B cell (primary cell): ENCODE measurements at regions of chr22 and their contacts with region 1.

Region 1: GRCh38 chr22:29359469-29359868 is 28.9 kb downstream of the AP1B1 start:
- DNase-seq: no peak
- ATAC-seq: no peak
- H3K4me3 ChIP-seq: no peak overlapping the region
- H3K4me3 Mint-ChIP-seq: no peak overlapping the region
- H3K27ac ChIP-seq: no peak overlapping the region
- H3K27ac Mint-ChIP-seq: peak overlapping the region; percentile 54
- H3K4me1 ChIP-seq: peaks cover 10 to 15% of the 10 kb centered on the region in 2 donors
- H3K4me1 Mint-ChIP-seq: peaks cover 19% of the 10 kb centered on the region
- H3K27me3 ChIP-seq: no peaks in the 10 kb centered on the region
- H3K27me3 Mint-ChIP-seq: no peaks in the 10 kb centered on the region
- CTCF ChIP-seq: no peak

Region 2: GRCh38 chr22:28497188-28497587 is 862.3 kb before region 1 on chr22:
- CTCF ChIA-PET with region 1: no interaction called
- POLR2A ChIA-PET with region 1: no interaction called
- intact Hi-C with region 1: no loop called
- DNase-seq: no peak
- ATAC-seq: no peak
- H3K4me3 ChIP-seq: no peak overlapping the region
- H3K4me3 Mint-ChIP-seq: no peak overlapping the region
- H3K27ac ChIP-seq: no peak overlapping the region
- H3K27ac Mint-ChIP-seq: no peak overlapping the region
- H3K4me1 ChIP-seq: no peaks in the 10 kb centered on the region
- H3K4me1 Mint-ChIP-seq: no peaks in the 10 kb centered on the region
- H3K27me3 ChIP-seq: no peaks in the 10 kb centered on the region
- H3K27me3 Mint-ChIP-seq: peaks cover 22% of the 10 kb centered on the region
- CTCF ChIP-seq: no peak

Region 3: GRCh38 chr22:28741758-28742561 is 617.5 kb before region 1 on chr22 and contains the starts of genes CHEK2 and HSCB:
- CTCF ChIA-PET with region 1: no interaction called
- POLR2A ChIA-PET with region 1: no interaction called
- intact Hi-C with region 1: no loop called
- DNase-seq: peak; percentile 98
- ATAC-seq: peak; percentile 91
- H3K4me3 ChIP-seq: peak within 1 kb of the TSS; percentile 74 to 99 (median 84)
- H3K4me3 Mint-ChIP-seq: peak within 1 kb of the TSS; percentile 87
- H3K27ac ChIP-seq: peak within 1 kb of the TSS; percentile 86 to 95
- H3K27ac Mint-ChIP-seq: peak within 1 kb of the TSS; percentile 83
- H3K4me1 ChIP-seq: peaks cover 10 to 18% of the 10 kb centered on the region in 2 donors
- H3K4me1 Mint-ChIP-seq: peaks cover 26% of the 10 kb centered on the region
- H3K27me3 ChIP-seq: no peaks in the 10 kb centered on the region
- H3K27me3 Mint-ChIP-seq: no peaks in the 10 kb centered on the region
- CTCF ChIP-seq: no peak
- total RNA-seq, gene CHEK2: 13.9 and 15.6 TPM in 2 replicates
- total RNA-seq, gene HSCB: 17.5 and 18.3 TPM in 2 replicates

Region 4: GRCh38 chr22:29245637-29246385 is 113.7 kb before region 1 on chr22:
- CTCF ChIA-PET with region 1: no interaction called
- POLR2A ChIA-PET with region 1: no interaction called
- intact Hi-C with region 1: no loop called
- DNase-seq: peak; percentile 76
- ATAC-seq: peak; percentile 89
- H3K4me3 ChIP-seq: no peak overlapping the region
- H3K4me3 Mint-ChIP-seq: no peak overlapping the region
- H3K27ac ChIP-seq: no peak overlapping the region
- H3K27ac Mint-ChIP-seq: no peak overlapping the region
- H3K4me1 ChIP-seq: peaks cover 3 to 4% of the 10 kb centered on the region in 2 donors
- H3K4me1 Mint-ChIP-seq: no peaks in the 10 kb centered on the region
- H3K27me3 ChIP-seq: peaks cover 0 to 17% (median 3%) of the 10 kb centered on the region in 4 experiments
- H3K27me3 Mint-ChIP-seq: peaks cover 20% of the 10 kb centered on the region
- CTCF ChIP-seq: peak; percentile 99

Region 5: GRCh38 chr22:29320546-29320945 is 38.9 kb before region 1 on chr22:
- CTCF ChIA-PET with region 1: no interaction called
- POLR2A ChIA-PET with region 1: no interaction called
- intact Hi-C with region 1: no loop called
- DNase-seq: no peak
- ATAC-seq: no peak
- H3K4me3 ChIP-seq: no peak overlapping the region
- H3K4me3 Mint-ChIP-seq: no peak overlapping the region
- H3K27ac ChIP-seq: no peak overlapping the region
- H3K27ac Mint-ChIP-seq: no peak overlapping the region
- H3K4me1 ChIP-seq: peaks cover 4 to 5% of the 10 kb centered on the region in 2 donors
- H3K4me1 Mint-ChIP-seq: peaks cover 2% of the 10 kb centered on the region
- H3K27me3 ChIP-seq: peaks cover 0 to 13% (median 4%) of the 10 kb centered on the region in 4 experiments
- H3K27me3 Mint-ChIP-seq: peaks cover 12% of the 10 kb centered on the region
- CTCF ChIP-seq: no peak

Region 6: DNA sequence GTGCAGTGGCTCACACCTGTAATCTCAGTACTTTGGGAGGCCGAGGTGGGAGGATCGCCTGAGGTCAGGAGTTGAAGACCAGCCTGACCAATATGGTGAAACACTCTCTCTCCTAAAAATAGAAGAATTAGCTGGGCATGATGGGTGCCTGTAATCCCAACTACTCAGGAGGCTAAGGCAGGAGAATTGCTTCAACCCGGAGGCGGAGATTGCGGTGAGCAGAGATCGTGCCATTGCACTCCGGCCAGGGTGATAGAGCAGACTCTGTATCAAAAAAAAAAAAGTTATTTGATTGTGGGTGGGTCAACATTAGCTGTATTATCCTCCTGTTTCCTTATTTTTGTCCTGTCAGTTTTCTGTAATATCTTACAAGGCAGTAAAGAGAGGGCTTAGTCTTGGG is 67.0 kb after region 1 on chr22:
- CTCF ChIA-PET with region 1: no interaction called
- POLR2A ChIA-PET with region 1: no interaction called
- intact Hi-C with region 1: loop called (anchors 2 kb)
- DNase-seq: no peak
- ATAC-seq: no peak
- H3K4me3 ChIP-seq: no peak overlapping the region
- H3K4me3 Mint-ChIP-seq: no peak overlapping the region
- H3K27ac ChIP-seq: no peak overlapping the region
- H3K27ac Mint-ChIP-seq: no peak overlapping the region
- H3K4me1 ChIP-seq: peaks cover 6 to 8% of the 10 kb centered on the region in 2 donors
- H3K4me1 Mint-ChIP-seq: peaks cover 5% of the 10 kb centered on the region
- H3K27me3 ChIP-seq: peaks cover 0 to 8% (median 0%) of the 10 kb centered on the region in 4 experiments
- H3K27me3 Mint-ChIP-seq: peaks cover 13% of the 10 kb centered on the region
- CTCF ChIP-seq: no peak